ENCODE measurements at regions of chr7 and their contacts with region 1.

Region 1: GRCh38 chr7:98168181-98168905 is 42.9 kb upstream of the BHLHA15 start:
- DNase-seq: peak in 1 of 2 donors; percentile 38
- H3K4me3 ChIP-seq: no peak overlapping the region
- H3K27ac ChIP-seq: no peak overlapping the region
- H3K4me1 ChIP-seq: no peaks in the 10 kb centered on the region
- H3K27me3 ChIP-seq: no peaks in the 10 kb centered on the region
- CTCF ChIP-seq: peak; percentile 69 to 84

Region 2: GRCh38 chr7:98021588-98022351 is 146.6 kb before region 1 on chr7:
- intact Hi-C with region 1: loop called (anchors 5 kb)
- DNase-seq: peak; percentile 67 to 78
- H3K4me3 ChIP-seq: no peak overlapping the region
- H3K27ac ChIP-seq: no peak overlapping the region
- H3K4me1 ChIP-seq: no peaks in the 10 kb centered on the region
- H3K27me3 ChIP-seq: peaks cover 0 to 10% of the 10 kb centered on the region in 2 donors
- CTCF ChIP-seq: peak; percentile 63 to 81

Region 3: DNA sequence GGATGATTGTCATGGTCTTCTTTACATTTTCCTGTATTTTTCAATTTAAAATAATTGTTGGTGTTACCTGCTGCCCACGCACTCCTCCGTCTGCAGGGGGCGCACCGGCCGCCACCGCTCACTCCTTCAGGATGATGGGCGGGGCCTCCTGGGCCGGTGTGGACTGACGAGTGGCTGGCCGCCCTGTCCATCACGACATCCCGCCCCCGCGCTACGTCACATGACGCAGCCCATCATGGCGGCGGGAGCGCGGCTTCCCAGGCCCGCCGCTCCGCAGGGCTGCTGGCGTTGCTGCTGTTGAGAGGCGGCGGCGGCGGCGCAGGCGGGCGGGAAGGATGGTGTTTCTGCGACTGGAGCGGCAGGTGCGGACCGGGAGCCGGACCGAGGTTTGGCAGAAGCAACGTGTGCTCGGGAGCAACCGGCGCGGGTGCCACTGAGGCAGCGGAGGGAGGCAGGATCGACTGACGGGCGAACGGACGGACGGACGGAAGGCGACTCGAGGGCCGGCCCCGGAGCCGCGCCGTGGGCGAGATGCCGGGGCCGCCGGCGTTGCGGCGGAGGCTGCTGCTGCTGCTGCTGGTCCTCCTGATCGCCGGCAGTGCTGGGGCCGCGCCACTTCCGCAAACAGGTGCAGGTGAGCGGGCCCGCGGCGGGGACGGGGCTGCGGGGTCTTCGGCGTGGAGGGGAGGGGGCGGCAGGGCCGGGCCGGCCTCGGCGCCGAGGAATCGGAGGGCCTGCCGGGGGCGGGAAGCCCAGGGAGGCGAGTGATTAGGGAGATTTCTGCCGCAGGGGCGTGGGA is 61.5 kb before region 1 on chr7 and contains the start of gene LMTK2:
- intact Hi-C with region 1: loop called (anchors 2 kb)
- DNase-seq: peak; percentile 96 to 97
- H3K4me3 ChIP-seq: peak within 1 kb of the TSS; percentile 92 to 93
- H3K27ac ChIP-seq: peak within 1 kb of the TSS; percentile 83 to 85
- H3K4me1 ChIP-seq: peaks cover 0 to 28% (median 14%) of the 10 kb centered on the region in 4 donors
- H3K27me3 ChIP-seq: peaks cover 0 to 4% of the 10 kb centered on the region in 2 donors
- CTCF ChIP-seq: peak; percentile 92 to 93

Measured in tibial artery (tissue), 4 donors.